ENCODE measurements at regions of chr9 and their contacts with region 1.

Region 1: DNA sequence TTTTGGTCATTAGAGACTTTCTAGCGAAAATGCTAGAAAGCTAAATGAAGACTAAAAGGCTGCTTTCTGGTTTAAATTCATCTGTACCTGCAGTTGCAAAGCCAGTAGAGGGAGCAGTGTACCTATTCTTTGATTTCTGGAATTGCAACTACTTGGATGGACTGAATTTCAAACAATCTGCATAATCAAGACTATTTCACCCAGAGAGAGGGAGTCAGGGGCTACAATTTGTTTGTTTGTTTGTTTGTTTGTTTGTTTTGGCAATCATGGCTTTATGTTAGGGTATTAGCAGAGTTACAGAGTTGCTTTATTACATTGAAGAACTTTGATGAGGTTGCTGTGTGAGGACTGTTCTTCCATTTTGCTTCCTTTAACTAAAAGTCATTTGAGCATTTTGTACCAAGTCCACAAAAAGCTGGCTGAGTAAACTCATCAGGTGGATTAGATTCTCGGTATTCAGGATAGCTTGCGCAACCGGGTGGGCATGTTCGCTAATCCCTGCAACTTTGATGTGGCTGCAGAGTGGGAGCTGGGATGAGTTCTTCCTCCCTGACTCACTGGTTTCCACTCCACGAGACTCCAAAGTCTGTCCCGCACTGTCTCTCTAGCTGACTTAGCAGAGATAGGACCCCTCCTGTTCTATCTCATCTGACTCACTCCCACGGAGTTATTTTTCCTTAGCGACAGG is 80.0 kb upstream of the TUT7 start:
- DNase-seq: peak; percentile 43
- ATAC-seq: peak; percentile 82 to 99

Region 2: GRCh38 chr9:86176468-86176867 is 257.7 kb before region 1 on chr9:
- intact Hi-C with region 1: no loop called
- DNase-seq: no peak
- ATAC-seq: no peak

Region 3: GRCh38 chr9:87324613-87325194 is 890.5 kb after region 1 on chr9:
- intact Hi-C with region 1: loop called (anchors 5 to 10 kb)
- DNase-seq: no peak
- ATAC-seq: peak; percentile 76 to 81

Region 4: DNA sequence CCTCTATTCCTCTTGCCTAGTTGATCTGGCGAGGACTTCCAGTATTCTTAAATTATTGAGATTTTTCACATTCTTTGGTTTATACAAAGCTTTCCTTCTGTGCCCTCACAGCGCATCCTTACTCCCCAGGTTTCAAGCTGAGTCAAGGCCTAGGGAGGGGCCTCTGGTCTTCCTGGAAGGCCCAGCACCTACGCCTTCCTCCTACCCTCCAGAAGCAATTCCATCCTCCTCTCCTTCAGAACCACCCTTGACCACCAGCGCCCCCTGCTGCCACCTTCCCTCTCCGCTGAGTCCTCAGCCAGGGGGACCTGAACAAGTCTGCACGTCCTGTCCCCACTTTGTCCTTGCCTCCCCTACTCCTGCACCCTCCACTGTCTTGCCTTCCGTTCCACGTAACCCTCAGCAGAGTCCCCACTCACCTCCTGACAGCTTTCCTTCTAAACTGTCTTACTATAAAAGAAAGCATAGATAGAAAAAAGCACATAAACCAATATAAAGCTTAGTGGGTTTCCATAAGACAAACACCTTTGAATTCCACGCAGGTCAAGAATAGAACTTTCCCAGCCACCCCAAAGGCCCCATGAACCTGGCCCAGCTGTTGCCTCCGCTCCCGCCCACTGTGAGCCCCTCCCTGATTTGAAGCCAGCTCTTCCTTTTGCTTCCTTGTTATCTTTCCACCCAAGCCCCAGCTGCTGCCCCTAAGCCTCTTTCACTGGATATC is 1228.8 kb after region 1 on chr9:
- intact Hi-C with region 1: loop called in 1 of 2 experiments (anchors 10 kb)
- DNase-seq: peak; percentile 82
- ATAC-seq: peak; percentile 81 to 88